Ascending aorta (tissue), 2 donors: ENCODE measurements at regions of chr1 and their contacts with region 1.

Region 1: DNA sequence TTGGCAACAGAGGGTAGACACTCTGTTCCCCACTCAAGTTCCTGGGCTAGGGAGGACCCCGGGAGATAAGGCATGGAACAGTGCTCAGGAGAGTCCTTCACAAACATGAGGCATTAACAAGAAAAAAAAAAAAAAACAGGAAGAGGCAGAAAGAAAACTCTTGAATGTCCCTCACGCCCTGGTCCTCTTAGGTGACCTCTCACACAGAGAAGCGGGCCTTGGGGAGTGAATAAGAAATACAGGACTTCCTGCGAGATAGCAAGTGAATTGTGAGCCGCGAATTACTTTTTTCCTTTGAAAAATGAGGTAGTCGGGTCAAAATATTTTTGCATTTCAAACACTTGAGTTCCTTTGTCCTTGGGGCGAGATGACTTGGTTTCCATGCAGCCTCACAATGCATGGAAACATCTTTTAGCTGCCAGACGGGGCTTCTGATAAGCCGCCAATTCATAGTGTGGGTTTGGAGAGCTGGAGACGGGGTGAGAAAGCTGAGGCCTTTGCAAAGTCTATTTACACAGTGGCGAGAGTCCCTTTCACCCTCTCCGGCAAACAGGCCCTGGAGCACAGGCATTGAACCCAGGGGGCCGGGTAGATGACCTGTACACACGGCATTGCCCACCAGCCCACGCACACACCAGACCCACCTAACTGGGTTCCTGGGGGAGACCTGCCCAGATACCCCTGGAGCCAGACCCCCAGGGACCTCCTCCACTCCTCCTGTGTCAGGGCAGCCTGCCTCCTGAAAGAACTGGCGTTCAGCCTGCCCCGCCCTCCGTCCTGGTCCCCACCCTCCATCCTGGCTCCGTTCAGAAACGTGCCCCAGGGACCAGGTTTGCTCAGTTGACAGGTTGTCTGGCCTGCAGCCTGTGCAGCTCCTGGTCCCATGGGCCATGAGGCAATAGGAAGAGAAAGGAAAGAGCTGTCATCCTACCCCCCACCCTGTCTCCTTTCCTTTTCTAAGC is 192.3 kb downstream of the PRDM16 start:
- DNase-seq: no peak
- H3K4me3 ChIP-seq: no peak overlapping the region
- H3K27ac ChIP-seq: peak overlapping the region; percentile 53 to 72
- H3K4me1 ChIP-seq: peaks cover 27 to 49% of the 10 kb centered on the region in 2 donors
- H3K27me3 ChIP-seq: no peaks in the 10 kb centered on the region
- CTCF ChIP-seq: no peak

Region 2: DNA sequence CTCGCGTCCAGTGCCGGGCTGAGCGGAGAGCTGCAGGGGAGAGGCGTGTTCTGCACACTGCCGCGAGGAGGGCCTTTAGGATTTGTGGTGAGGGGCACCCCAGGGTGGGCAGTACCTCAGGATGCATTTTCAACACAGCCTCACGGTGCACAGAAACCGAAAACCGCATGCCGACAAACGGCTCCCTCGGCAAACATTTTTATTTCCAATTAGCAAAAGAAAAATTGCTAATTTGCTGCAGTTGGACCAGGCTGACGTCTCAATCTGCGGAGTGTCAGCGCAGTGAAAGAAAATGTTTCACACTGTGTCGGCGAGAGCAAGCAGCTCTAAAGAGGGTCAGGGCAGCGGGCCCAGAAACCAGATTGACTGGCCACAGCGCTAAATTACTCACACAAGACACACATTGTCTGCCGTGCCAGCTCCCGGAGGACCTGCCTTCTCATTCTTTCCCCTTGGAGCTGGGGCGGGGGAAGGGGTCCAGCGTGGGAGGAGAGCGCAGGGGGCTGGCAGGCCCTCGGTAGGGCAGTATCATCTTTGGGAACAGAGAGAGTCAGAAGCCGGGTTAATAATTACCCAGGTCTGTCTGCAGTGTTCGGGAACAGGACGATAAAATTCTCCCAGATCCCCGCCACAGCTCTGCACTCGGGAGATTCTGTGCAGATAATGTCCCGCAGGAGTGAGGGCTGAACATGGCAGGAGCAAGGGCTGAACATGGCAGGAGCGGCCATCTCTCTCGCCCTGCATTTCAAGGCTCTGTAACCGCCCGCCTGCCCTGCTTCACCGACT is 42.1 kb before region 1 on chr1:
- intact Hi-C with region 1: loop called (anchors 5 kb)
- DNase-seq: peak; percentile 54 to 89
- H3K4me3 ChIP-seq: peak overlapping the region in 1 of 2 donors; percentile 22
- H3K27ac ChIP-seq: peak overlapping the region; percentile 73 to 76
- H3K4me1 ChIP-seq: peaks cover 31 to 65% of the 10 kb centered on the region in 2 donors
- H3K27me3 ChIP-seq: no peaks in the 10 kb centered on the region
- CTCF ChIP-seq: no peak